Activated naive CD4-positive, alpha-beta T cell treated with anti-CD3 and anti-CD28 coated beads for 36 hours (primary cell): ENCODE measurements at regions of chr7 and their contacts with region 1.

Region 1: DNA sequence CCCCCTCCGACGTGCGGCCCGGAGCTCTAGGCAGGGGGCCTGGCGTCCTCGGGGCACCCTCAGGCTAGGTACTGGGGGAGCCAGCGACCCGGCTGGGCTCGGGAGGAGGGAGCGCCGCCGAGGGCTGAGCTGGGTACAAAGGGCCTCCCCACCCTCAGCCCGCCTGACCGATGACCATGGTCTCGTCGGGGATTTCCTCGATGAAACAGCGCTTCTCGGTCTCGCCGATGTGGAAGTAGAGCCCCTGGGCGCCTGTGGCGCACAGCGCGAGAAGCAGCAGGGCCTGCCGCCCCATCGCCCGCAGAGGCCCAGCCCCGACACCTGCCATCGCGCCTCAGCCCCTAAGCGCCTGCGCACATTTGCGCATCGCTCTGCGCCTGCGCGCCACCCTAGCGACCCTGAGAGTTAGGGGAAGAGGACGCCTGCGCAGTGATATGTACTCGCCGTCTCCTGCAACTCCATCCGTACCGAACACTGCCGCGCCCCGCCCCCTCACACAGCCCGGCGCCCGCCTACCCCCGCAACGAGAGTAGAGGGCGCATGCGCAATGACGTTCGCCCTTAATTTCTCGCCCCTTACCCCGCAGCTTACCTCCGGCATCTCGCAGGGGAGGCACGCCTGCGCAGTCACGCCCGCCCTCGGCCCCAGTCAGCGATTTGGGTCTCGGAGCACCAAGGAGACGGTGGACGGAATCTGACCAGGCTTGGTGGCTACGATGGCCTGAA is at the start of gene TMED4:
- DNase-seq: peak; percentile 100
- H3K4me3 Mint-ChIP-seq: peak within 1 kb of the TSS; percentile 90
- H3K27ac Mint-ChIP-seq: peak within 1 kb of the TSS; percentile 87
- H3K4me1 Mint-ChIP-seq: peaks cover 33% of the 10 kb centered on the region
- H3K27me3 Mint-ChIP-seq: peaks cover 2% of the 10 kb centered on the region
- total RNA-seq, gene TMED4: 77.3 to 81.8 TPM

Region 2: GRCh38 chr7:44257618-44258422 is 324.2 kb before region 1 on chr7:
- CTCF ChIA-PET with region 1: no interaction called
- intact Hi-C with region 1: loop called (anchors 5 kb)
- DNase-seq: peak; percentile 90
- H3K4me3 Mint-ChIP-seq: peak overlapping the region; percentile 17
- H3K27ac Mint-ChIP-seq: peak overlapping the region; percentile 94
- H3K4me1 Mint-ChIP-seq: peaks cover 29% of the 10 kb centered on the region
- H3K27me3 Mint-ChIP-seq: no peaks in the 10 kb centered on the region

Region 3: DNA sequence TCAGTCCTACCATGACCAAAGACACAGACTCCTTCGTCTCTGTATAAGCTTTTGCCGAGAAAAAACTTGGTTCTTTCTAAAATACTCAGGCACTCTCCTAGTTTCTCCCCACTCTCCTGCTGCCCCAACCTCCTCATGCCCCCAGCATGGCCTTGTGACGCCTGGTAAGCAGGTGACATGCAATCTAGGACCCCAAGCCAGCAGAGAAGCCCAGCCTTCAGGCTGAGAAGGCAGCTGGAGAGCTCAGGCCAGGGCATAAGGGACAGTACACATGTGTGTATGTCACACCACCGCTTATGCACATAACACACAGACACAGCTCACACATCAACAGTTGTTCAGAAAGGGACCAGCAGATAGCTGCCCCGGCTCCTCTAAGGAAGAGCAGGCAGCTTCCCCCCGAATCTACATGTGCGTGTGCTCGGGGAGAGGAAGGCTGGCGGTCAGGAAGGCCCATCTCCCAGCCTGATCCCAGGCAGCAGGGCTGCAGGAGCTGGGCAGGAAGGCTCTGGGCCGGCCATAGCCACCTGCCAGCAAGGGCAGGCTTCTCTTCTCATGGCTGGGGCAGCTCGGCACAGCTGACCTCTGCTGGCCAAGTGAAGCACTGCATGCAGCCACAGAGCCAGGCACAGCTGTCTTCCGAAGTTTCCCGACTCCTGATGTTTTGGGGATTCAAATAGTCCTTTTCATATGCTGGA is 16.8 kb before region 1 on chr7:
- CTCF ChIA-PET with region 1: interaction called, 34 read pairs
- intact Hi-C with region 1: no loop called
- DNase-seq: peak; percentile 71
- H3K4me3 Mint-ChIP-seq: no peak overlapping the region
- H3K27ac Mint-ChIP-seq: peak overlapping the region; percentile 9
- H3K4me1 Mint-ChIP-seq: peaks cover 11% of the 10 kb centered on the region
- H3K27me3 Mint-ChIP-seq: no peaks in the 10 kb centered on the region

Region 4: DNA sequence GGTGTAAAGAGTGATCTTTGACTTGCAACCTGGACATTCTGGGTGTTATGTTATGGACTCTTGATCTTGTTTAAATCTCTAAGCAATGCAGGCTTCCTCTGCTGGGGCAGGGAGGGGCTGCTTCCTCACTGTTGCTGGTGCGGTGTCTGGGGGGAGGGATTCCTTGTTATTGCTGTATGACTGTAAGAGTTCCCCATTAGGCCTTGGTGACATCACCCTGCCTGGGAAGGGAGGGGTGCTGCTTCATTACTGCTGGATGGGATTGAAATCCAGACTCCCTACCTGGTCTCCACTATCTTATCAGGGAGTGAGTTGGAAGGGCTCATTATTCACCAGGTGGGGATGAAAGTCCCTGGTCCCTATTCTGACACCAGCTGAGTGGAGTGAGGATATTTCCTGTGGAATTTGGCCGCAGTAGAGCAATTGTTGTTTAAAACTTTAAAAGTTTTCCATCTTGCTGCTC is 33.1 kb after region 1 on chr7:
- CTCF ChIA-PET with region 1: no interaction called
- intact Hi-C with region 1: loop called (anchors 1 kb)
- DNase-seq: peak; percentile 57
- H3K4me3 Mint-ChIP-seq: no peak overlapping the region
- H3K27ac Mint-ChIP-seq: peak overlapping the region; percentile 25
- H3K4me1 Mint-ChIP-seq: peaks cover 60% of the 10 kb centered on the region
- H3K27me3 Mint-ChIP-seq: no peaks in the 10 kb centered on the region

Region 5: DNA sequence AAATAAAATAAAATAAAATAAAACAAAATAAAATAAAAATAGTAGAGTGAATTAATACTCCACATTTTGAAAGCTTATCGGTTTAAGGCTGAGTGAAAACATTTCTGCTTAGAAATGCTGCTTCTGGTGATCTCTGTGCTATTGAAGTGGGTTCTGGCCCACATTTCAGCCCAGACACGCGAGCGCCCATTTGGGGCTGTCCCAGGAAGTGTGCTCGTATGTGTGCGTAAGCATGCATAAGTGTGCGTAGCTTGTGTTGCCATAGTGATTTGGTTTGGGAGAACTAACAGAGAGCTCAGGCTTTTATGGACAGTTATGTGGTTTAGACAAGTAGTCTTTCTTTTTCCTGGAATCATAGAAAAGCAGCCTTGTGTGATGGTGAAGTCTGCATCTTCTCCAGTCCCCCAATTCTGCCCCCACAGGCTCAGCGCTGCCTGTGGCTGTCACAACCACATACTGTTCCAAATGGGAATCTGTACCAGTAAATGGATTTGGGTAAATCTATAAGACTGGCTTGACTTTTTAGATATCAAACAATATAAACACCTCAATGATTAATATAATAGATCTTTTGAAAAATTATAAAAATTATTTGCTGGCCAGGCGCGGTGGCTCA is 333.1 kb after region 1 on chr7:
- CTCF ChIA-PET with region 1: no interaction called
- intact Hi-C with region 1: loop called (anchors 1 kb)
- DNase-seq: peak; percentile 88
- H3K4me3 Mint-ChIP-seq: no peak overlapping the region
- H3K27ac Mint-ChIP-seq: peak overlapping the region; percentile 83
- H3K4me1 Mint-ChIP-seq: peaks cover 17% of the 10 kb centered on the region
- H3K27me3 Mint-ChIP-seq: no peaks in the 10 kb centered on the region